ENCODE measurements at regions of chr5 and their contacts with region 1.

Region 1: DNA sequence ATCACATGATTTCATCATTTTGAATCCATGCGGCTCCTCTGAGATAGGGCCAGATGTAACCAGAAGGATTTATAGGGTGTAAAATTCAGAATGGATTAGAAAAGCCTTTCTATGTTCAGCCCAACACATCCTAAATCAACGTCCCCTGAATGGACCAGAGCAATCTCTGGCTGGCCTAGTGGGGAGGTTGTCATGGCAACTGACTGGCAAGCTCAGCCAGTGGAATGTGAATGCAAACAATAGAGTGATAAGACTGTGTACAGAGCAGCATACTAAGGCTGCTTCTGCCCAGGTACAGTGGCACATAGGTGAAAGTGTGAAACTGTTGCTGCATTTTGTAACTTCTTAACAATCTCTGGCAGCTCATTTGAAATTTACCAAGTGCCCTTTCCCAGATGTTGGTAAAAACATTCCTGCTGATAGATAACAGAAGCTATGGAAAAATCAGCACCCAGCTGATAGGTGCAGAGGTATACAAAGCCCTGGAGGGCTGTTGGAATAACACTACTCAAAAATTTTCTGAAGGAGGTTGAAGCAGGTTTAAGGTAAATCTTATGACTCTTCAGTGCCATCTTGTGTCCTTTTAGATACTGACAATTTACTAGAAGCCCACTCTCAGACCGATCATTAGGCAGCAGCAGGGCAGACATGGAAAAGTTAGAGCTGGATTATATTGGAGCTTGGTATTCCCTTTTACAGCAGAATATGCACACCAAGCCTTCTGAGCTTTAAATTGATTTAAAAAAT is 267.2 kb downstream of the RAB3C start:
- DNase-seq: no peak
- H3K4me3 ChIP-seq: no peak overlapping the region
- H3K27ac ChIP-seq: no peak overlapping the region
- H3K4me1 ChIP-seq: no peaks in the 10 kb centered on the region
- H3K27me3 ChIP-seq: peaks cover 0 to 7% (median 0%) of the 10 kb centered on the region in 4 donors
- CTCF ChIP-seq: peak in 5 of 6 experiments; percentile 9 to 46 (median 29)
- POLR2A ChIP-seq: no peak

Region 2: DNA sequence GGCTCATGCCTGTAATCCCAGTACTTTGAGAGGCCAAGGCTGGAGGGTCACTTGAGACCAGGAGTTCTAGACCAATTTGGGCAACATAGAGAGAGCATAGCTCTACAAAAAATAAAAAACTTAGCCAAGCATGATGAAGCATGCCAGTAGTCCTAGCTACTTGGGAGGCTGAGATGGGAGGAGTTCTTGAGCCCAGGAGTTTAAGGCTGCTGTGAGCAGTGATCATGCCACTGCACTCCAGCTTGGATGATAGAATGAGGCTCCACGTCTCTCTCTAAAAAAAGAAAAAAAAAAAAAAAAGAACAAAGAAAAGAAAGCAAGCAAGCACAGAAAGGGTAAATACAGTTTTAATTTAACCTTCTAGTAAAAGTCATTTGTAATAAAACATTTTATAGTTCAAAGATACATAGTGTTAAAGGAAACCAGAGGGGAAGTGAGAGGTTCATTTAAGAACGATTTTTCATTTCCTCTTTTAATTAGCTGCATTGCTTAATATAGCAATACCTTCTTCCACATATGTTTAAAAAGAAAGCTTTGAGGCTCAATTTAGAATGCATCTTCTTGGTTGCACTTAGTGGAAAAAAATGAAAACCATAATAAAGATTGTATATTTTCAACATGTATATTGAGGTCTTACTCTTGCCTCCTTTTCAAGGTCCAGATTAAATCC is 344.0 kb before region 1 on chr5:
- intact Hi-C with region 1: loop called (anchors 10 kb)
- DNase-seq: no peak
- H3K4me3 ChIP-seq: no peak overlapping the region
- H3K27ac ChIP-seq: no peak overlapping the region
- H3K4me1 ChIP-seq: no peaks in the 10 kb centered on the region
- H3K27me3 ChIP-seq: peaks cover 0 to 7% (median 0%) of the 10 kb centered on the region in 4 donors
- CTCF ChIP-seq: no peak
- POLR2A ChIP-seq: no peak

Region 3: GRCh38 chr5:59188419-59189225 is 338.5 kb after region 1 on chr5:
- intact Hi-C with region 1: no loop called
- DNase-seq: no peak
- H3K4me3 ChIP-seq: peak overlapping the region in 3 of 4 donors; percentile 12 to 27 (median 13)
- H3K27ac ChIP-seq: peak overlapping the region in 2 of 4 donors; percentile 47 to 52
- H3K4me1 ChIP-seq: peaks cover 0 to 15% (median 0%) of the 10 kb centered on the region in 3 donors
- H3K27me3 ChIP-seq: no peaks in the 10 kb centered on the region
- CTCF ChIP-seq: peak; percentile 78 to 83 (median 80)
- POLR2A ChIP-seq: no peak